Naive thymus-derived CD4-positive, alpha-beta T cell (primary cell): ENCODE measurements at regions of chr14 and their contacts with region 1.

Region 1: DNA sequence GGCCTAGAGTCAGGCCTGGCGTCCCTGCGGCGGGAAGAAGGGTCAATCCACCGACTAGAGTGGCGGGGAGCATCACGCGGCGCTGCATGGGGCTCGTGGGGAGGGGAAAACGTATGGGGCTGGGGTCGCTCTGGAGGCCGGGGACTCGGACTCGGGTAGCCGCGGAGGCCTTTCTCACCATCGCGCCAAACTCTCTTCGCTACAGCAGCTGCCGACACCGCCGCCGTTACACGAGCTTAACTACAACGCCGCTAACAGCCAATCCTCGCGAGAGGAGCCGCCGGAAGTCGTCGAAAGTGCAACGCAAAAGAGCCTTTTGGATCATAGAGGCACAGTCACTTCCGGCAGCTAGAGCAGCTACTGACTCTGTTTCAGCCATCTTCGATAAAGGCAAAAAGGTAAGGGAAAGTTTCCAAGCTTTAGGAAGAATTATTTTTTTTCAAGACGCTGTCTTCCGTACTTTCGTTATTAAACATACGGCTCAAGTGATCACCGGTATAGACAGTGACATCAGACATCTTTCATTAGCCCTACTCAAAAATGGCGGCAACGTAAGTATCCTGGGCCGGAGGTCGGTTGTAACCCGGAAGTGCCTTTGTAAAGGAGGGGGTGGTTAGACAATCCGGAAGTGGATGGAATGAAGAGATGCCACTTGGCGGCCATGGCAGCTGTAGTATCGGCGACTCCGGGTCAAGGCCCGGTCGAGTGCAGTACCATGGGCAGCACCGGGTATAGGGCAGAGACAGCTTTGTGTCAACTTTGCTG is at the starts of genes ERH and SLC39A9:
- DNase-seq: peak; percentile 78 to 97 (median 94)
- ATAC-seq: peak; percentile 93
- H3K4me3 ChIP-seq: peak within 1 kb of the TSS; percentile 81
- H3K4me3 Mint-ChIP-seq: peak within 1 kb of the TSS; percentile 89 to 100 (median 97)
- H3K27ac ChIP-seq: peak within 1 kb of the TSS; percentile 86
- H3K27ac Mint-ChIP-seq: peak within 1 kb of the TSS; percentile 98 to 100 (median 100)
- H3K4me1 ChIP-seq: peaks cover 31 to 52% of the 10 kb centered on the region in 2 donors
- H3K4me1 Mint-ChIP-seq: peaks cover 39 to 93% (median 73%) of the 10 kb centered on the region in 7 donors
- H3K27me3 ChIP-seq: no peaks in the 10 kb centered on the region
- H3K27me3 Mint-ChIP-seq: no peaks in the 10 kb centered on the region
- total RNA-seq, gene ERH: 85.1 to 330 (median 96.3) TPM
- total RNA-seq, gene SLC39A9: 27.2 to 50.3 (median 35.3) TPM

Region 2: GRCh38 chr14:67674481-67675169 is 1723.6 kb before region 1 on chr14 and contains the start of gene VTI1B:
- CTCF ChIA-PET with region 1: no interaction called
- POLR2A ChIA-PET with region 1: interaction called, 4 read pairs
- intact Hi-C with region 1: loop called in 1 of 2 experiments (anchors 1 kb)
- DNase-seq: peak; percentile 71 to 84 (median 80)
- ATAC-seq: peak; percentile 95
- H3K4me3 ChIP-seq: peak within 1 kb of the TSS; percentile 65
- H3K4me3 Mint-ChIP-seq: peak within 1 kb of the TSS; percentile 91 to 96 (median 93)
- H3K27ac ChIP-seq: peak within 1 kb of the TSS; percentile 95
- H3K27ac Mint-ChIP-seq: peak within 1 kb of the TSS; percentile 82 to 96 (median 92)
- H3K4me1 ChIP-seq: peaks cover 17 to 21% of the 10 kb centered on the region in 2 donors
- H3K4me1 Mint-ChIP-seq: peaks cover 22 to 62% (median 55%) of the 10 kb centered on the region in 7 donors
- H3K27me3 ChIP-seq: no peaks in the 10 kb centered on the region
- H3K27me3 Mint-ChIP-seq: no peaks in the 10 kb centered on the region
- total RNA-seq, gene VTI1B: 49.2 to 82.4 (median 65.9) TPM

Region 3: DNA sequence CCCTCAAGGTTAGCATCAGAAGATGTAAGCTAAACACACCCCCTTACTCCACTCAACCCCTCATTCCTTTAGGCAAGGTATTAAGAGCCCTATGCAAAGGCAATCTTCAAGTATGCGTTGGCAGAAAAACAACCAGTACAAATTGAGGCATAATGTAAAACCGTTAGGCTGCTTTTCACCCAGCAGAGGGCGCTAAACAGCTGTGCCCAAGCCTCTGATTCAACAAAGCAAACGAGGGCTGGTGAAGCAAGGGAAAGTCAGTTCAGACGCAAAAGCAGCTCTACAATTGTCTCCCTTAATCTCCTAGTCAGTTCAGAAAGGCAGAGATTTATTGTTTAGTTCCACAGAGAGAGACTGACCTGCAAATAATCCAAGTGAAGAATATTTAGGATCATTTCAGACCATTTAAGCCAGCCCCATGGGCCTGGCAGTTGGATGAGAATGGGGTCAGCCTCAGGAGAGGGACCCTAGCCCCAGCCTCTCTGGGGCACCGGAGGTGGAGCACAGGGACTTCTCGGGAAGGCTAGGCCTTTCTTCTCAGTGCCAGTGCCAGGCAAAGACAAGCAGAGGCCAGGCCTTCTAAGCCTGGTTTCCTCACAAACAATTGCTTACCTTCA is 268.9 kb before region 1 on chr14:
- CTCF ChIA-PET with region 1: interaction called, 3 read pairs
- POLR2A ChIA-PET with region 1: no interaction called
- intact Hi-C with region 1: loop called in 1 of 2 experiments (anchors 10 kb)
- DNase-seq: peak; percentile 28 to 82 (median 72)
- ATAC-seq: peak; percentile 95
- H3K4me3 ChIP-seq: no peak overlapping the region
- H3K4me3 Mint-ChIP-seq: peak overlapping the region in 8 of 10 donors; percentile 2 to 37 (median 23)
- H3K27ac ChIP-seq: peak overlapping the region; percentile 27
- H3K27ac Mint-ChIP-seq: peak overlapping the region in 8 of 9 donors; percentile 44 to 91 (median 82)
- H3K4me1 ChIP-seq: peaks cover 16 to 33% of the 10 kb centered on the region in 2 donors
- H3K4me1 Mint-ChIP-seq: peaks cover 36 to 94% (median 90%) of the 10 kb centered on the region in 7 donors
- H3K27me3 ChIP-seq: no peaks in the 10 kb centered on the region
- H3K27me3 Mint-ChIP-seq: no peaks in the 10 kb centered on the region

Region 4: DNA sequence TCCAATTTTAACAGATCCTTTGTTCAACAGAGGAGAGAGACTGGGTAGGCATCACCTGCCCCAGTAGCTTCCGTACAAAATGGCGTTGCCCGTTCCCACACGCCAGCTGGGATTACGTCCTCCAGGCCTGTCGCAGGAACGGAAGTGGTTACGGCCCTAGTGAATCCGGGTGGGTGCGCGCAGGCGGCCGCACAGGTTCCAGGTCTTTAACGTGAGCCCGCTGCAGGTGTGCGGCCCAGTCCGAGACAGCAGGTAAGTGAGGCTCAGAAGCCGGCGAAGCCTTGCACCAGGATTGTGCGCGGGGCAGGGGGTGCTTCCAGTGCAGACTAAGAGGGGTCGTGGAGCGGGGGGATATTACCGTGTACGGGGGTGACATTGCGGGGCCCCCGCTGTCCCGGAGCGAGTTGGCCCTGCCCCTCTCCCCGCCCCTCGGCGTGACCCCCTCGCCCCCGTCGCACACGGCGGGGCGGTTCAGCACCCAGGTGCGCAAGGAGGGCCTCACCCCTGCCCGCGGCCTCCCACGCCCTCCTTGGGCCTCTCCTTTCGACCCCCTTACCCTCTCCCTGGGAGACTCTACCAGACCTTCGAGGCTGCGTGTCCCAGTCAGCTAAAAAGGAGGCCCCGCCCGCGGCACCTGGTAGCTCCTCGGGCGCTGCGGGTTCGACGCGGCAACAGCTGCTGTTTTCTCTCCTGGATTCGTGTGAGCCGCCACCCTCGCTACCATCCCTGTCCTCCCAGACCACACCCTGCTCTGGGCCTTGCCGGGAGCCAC is 206.7 kb before region 1 on chr14 and contains the start of gene EXD2:
- CTCF ChIA-PET with region 1: no interaction called
- POLR2A ChIA-PET with region 1: interaction called, 7 read pairs
- intact Hi-C with region 1: loop called (anchors 1 kb)
- DNase-seq: peak; percentile 27 to 68 (median 61)
- ATAC-seq: peak; percentile 81
- H3K4me3 ChIP-seq: peak within 1 kb of the TSS; percentile 71
- H3K4me3 Mint-ChIP-seq: peak within 1 kb of the TSS; percentile 91 to 97 (median 94)
- H3K27ac ChIP-seq: peak within 1 kb of the TSS; percentile 70
- H3K27ac Mint-ChIP-seq: peak within 1 kb of the TSS; percentile 80 to 96 (median 92)
- H3K4me1 ChIP-seq: peaks cover 0 to 6% of the 10 kb centered on the region in 2 donors
- H3K4me1 Mint-ChIP-seq: peaks cover 16 to 44% (median 38%) of the 10 kb centered on the region in 7 donors
- H3K27me3 ChIP-seq: no peaks in the 10 kb centered on the region
- H3K27me3 Mint-ChIP-seq: peaks cover 0 to 14% (median 0%) of the 10 kb centered on the region in 5 donors
- total RNA-seq, gene EXD2: 4.8 to 17.2 (median 10.6) TPM

Region 5: GRCh38 chr14:69260861-69261564 is 137.2 kb before region 1 on chr14:
- CTCF ChIA-PET with region 1: no interaction called
- POLR2A ChIA-PET with region 1: no interaction called
- intact Hi-C with region 1: loop called in 1 of 2 experiments (anchors 1 kb)
- DNase-seq: peak in 5 of 9 donors; percentile 4 to 52 (median 12)
- ATAC-seq: peak; percentile 69
- H3K4me3 ChIP-seq: no peak overlapping the region
- H3K4me3 Mint-ChIP-seq: peak overlapping the region in 9 of 10 donors; percentile 21 to 85 (median 65)
- H3K27ac ChIP-seq: no peak overlapping the region
- H3K27ac Mint-ChIP-seq: no peak overlapping the region
- H3K4me1 ChIP-seq: no peaks in the 10 kb centered on the region
- H3K4me1 Mint-ChIP-seq: peaks cover 0 to 16% (median 5%) of the 10 kb centered on the region in 7 donors
- H3K27me3 ChIP-seq: peaks cover 0 to 10% of the 10 kb centered on the region in 2 donors
- H3K27me3 Mint-ChIP-seq: peaks cover 30 to 74% (median 51%) of the 10 kb centered on the region in 5 donors

Region 6: GRCh38 chr14:69547701-69548348 is 149.6 kb after region 1 on chr14:
- CTCF ChIA-PET with region 1: no interaction called
- POLR2A ChIA-PET with region 1: no interaction called
- intact Hi-C with region 1: no loop called
- DNase-seq: peak in 2 of 9 donors; percentile 7 to 52
- ATAC-seq: peak; percentile 50
- H3K4me3 ChIP-seq: no peak overlapping the region
- H3K4me3 Mint-ChIP-seq: peak overlapping the region in 1 of 10 donors; percentile 7
- H3K27ac ChIP-seq: no peak overlapping the region
- H3K27ac Mint-ChIP-seq: no peak overlapping the region
- H3K4me1 ChIP-seq: no peaks in the 10 kb centered on the region
- H3K4me1 Mint-ChIP-seq: peaks cover 0 to 17% (median 4%) of the 10 kb centered on the region in 7 donors
- H3K27me3 ChIP-seq: no peaks in the 10 kb centered on the region
- H3K27me3 Mint-ChIP-seq: peaks cover 26 to 55% (median 46%) of the 10 kb centered on the region in 5 donors

Region 7: DNA sequence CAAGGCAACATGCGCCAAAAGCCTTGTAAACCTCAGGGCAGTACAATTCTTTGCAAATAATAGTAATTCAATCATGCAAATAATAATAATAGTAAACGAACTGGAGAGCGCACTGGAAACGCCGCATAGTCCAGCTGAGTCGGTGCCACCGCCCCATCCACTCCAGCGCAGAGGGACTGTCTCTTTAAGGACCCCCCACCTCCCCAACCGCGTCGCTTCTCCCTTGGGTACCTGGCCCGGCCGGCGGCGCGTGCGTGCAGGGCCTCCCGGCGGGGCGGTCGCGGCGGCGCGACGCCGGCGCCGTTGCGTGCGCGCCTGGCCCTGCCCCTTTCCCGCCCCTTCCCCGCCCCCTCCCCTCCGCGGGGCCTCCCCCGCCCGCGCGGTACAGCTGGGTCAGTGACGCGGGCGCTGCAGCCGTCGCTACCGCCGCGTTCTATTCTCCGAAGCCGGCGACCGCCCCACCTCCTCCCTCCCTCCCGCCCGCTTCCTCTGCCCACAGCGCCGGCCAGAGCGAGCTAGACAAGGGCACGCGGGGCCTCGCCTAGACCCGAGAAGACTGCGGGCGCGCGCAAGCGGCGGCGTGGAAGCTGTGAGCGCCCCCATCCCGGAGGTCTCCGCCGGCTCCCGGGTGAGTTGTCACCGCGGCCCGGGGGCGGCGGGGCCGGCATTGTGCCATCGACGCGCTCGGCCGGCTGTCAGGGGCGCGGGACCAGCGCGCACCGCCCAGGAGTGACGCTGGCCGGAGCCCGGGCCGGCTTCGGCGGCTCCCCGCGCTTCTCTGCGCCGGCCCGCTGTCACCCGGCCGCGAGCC is 213.2 kb after region 1 on chr14 and contains the start of gene SUSD6:
- CTCF ChIA-PET with region 1: no interaction called
- POLR2A ChIA-PET with region 1: no interaction called
- intact Hi-C with region 1: loop called (anchors 1 to 5 kb)
- DNase-seq: peak; percentile 79 to 87 (median 85)
- ATAC-seq: peak; percentile 88
- H3K4me3 ChIP-seq: peak within 1 kb of the TSS; percentile 91
- H3K4me3 Mint-ChIP-seq: peak within 1 kb of the TSS; percentile 91 to 98 (median 94)
- H3K27ac ChIP-seq: peak within 1 kb of the TSS; percentile 85
- H3K27ac Mint-ChIP-seq: peak within 1 kb of the TSS; percentile 95 to 99 (median 98)
- H3K4me1 ChIP-seq: peaks cover 38 to 54% of the 10 kb centered on the region in 2 donors
- H3K4me1 Mint-ChIP-seq: peaks cover 44 to 69% (median 63%) of the 10 kb centered on the region in 7 donors
- H3K27me3 ChIP-seq: no peaks in the 10 kb centered on the region
- H3K27me3 Mint-ChIP-seq: no peaks in the 10 kb centered on the region
- total RNA-seq, gene SUSD6: 42.9 to 90.8 (median 65.0) TPM

Region 8: DNA sequence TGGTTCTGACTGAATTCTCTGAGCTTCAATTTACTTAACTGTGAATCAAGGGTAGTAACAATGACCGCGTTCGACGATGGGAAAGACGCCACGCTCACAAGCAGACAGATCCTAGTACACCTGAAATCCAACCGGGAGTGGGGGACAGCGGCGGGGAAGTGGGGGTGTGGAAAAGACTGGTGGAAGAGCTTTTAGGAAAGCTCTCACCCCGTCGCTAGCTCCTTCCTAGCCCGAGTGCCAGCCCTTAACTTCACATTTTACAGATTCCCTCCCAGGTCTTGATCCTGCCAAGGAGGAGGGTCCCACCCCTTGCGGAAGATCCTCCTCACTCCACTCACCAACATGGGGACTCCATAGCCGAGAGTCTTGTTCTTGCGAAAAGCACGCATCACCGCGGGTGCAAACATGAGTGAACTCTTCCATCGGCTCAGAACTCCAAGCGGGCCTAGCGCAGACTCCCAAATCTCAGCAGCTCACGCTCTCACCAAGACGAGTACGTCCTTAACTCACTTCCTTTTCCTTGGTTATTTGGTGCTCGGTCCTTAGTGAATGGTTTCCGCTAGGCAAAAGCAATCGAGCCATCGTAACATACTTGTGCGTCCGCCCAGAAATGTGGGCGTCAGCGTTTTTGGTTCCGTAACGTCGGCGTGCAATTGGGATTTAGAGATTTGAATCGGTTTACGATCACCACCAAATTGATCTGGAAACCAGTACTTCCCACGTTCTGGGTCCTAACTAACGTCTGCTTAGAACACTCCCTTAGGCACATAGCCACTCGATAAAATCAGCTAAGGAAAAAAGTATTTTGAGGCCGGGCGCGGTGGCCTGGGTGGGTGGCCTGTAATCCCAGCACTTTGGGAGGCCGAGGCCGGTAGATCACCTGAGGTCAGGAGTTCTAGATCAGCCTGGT is 961.2 kb after region 1 on chr14 and contains the start of gene COX16:
- CTCF ChIA-PET with region 1: no interaction called
- POLR2A ChIA-PET with region 1: interaction called, 7 read pairs
- intact Hi-C with region 1: loop called in 1 of 2 experiments (anchors 1 kb)
- DNase-seq: peak; percentile 45 to 84 (median 81)
- ATAC-seq: peak; percentile 99
- H3K4me3 ChIP-seq: peak within 1 kb of the TSS; percentile 73
- H3K4me3 Mint-ChIP-seq: peak within 1 kb of the TSS; percentile 97 to 100 (median 99)
- H3K27ac ChIP-seq: peak within 1 kb of the TSS; percentile 82
- H3K27ac Mint-ChIP-seq: peak within 1 kb of the TSS; percentile 87 to 98 (median 94)
- H3K4me1 ChIP-seq: peaks cover 3 to 26% of the 10 kb centered on the region in 2 donors
- H3K4me1 Mint-ChIP-seq: peaks cover 32 to 58% (median 52%) of the 10 kb centered on the region in 7 donors
- H3K27me3 ChIP-seq: no peaks in the 10 kb centered on the region
- H3K27me3 Mint-ChIP-seq: peaks cover 0 to 12% (median 0%) of the 10 kb centered on the region in 5 donors
- total RNA-seq, gene COX16: 11.8 to 57.0 (median 19.5) TPM